Activated CD4-positive, alpha-beta T cell treated with anti-CD3 and anti-CD28 coated beads for 36 hours (primary cell): ENCODE measurements at regions of chr2 and their contacts with region 1.

Region 1: DNA sequence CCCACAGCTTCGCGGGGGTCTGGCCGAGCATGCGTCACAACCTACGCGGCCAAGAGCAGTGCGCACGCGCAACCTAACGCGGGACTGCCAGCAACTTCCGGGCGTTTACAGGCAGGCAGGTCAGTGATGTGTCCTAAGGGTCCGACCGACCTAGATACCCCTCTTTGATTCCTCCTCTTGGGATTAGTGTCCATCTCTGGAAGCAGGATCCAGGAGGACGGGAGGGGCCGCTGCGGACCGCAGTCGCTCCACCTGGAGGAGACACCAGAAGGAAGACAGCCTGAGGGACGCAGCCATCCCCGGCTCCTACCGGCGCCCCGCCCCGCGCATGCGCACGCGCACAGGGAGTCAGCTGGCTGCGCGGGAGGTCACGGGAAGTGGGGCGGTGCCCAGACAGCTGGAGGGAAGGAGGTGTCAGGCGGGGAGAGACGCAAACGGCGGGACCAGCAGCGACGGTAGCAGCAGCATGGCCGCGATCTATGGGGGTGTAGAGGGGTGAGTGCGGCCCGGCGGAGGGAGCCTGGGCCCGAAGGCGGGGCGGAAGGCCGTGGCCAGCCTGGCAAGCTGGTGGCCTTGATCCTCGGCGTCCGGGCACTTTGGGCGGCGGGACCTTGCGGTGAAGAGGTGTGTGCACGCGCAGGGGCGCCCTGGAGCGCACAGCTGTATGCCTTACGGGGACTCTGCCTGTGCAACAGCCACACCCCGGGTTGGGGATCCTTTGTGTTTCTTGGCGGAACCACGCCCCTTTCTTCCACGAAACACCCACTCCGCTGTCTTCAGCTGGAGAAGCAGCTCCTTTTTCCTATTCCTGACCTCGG is at the start of gene NAGK:
- DNase-seq: peak; percentile 98
- ATAC-seq: peak; percentile 81
- H3K4me3 Mint-ChIP-seq: peak within 1 kb of the TSS; percentile 98
- H3K27ac Mint-ChIP-seq: peak within 1 kb of the TSS; percentile 97
- H3K4me1 Mint-ChIP-seq: peaks cover 53% of the 10 kb centered on the region
- H3K27me3 Mint-ChIP-seq: no peaks in the 10 kb centered on the region
- total RNA-seq, gene NAGK: 39.7 to 40.6 TPM

Region 2: GRCh38 chr2:70994756-70995729 is 73.4 kb before region 1 on chr2 and contains the start of gene TEX261:
- CTCF ChIA-PET with region 1: interaction called, 17 read pairs
- POLR2A ChIA-PET with region 1: no interaction called
- intact Hi-C with region 1: loop called (anchors 1 to 2 kb)
- DNase-seq: peak; percentile 94
- ATAC-seq: peak; percentile 97
- H3K4me3 Mint-ChIP-seq: peak within 1 kb of the TSS; percentile 98
- H3K27ac Mint-ChIP-seq: peak within 1 kb of the TSS; percentile 93
- H3K4me1 Mint-ChIP-seq: peaks cover 29% of the 10 kb centered on the region
- H3K27me3 Mint-ChIP-seq: no peaks in the 10 kb centered on the region
- total RNA-seq, gene TEX261: 39.1 to 48.5 TPM

Region 3: GRCh38 chr2:71018625-71019024 is 49.8 kb before region 1 on chr2:
- CTCF ChIA-PET with region 1: interaction called, 4 read pairs
- POLR2A ChIA-PET with region 1: no interaction called
- intact Hi-C with region 1: loop called in 1 of 2 experiments (anchors 1 kb)
- DNase-seq: no peak
- ATAC-seq: peak; percentile 47
- H3K4me3 Mint-ChIP-seq: no peak overlapping the region
- H3K27ac Mint-ChIP-seq: no peak overlapping the region
- H3K4me1 Mint-ChIP-seq: peaks cover 7% of the 10 kb centered on the region
- H3K27me3 Mint-ChIP-seq: peaks cover 2% of the 10 kb centered on the region

Region 4: DNA sequence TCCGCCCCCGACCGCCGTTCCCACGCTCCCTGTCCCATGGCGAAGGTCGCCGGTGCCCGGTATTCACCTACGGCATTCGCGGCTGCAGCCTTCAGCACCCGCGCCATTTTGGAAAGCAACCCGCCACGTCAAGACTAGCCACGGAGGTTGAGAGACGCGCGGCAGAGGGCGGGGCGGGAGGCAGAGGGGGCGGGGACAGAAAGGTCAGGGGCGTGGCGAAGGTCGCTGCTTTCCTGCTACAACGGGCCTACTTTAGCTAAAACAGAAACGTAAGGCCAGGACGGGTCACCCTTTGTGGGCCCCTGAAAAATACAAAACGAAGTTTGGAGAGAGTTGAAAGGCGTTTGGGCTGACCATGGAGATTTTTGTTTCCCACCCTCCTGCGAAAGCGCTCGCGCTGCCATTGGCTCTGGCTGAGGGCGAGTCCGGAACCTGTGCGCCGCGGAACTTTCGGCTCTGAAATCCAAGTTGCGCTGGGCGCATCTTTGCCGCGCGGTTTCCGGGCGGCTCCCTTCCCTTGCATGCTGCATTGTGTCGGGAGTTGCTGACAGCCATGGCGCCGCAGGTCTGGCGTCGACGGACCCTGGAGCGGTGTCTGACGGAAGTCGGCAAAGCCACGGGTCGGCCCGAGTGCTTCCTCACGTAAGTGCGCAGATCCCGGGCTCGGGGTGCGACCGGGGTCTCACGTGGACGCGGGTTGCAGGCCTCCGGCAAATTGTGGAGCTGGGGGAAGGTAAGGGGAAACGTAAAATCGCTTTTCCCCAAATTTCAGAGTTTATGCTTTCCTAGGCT is 61.9 kb after region 1 on chr2 and contains the starts of genes MCEE and MPHOSPH10:
- CTCF ChIA-PET with region 1: interaction called, 20 read pairs
- POLR2A ChIA-PET with region 1: interaction called, 3 read pairs
- intact Hi-C with region 1: loop called (anchors 1 kb)
- DNase-seq: peak; percentile 95
- ATAC-seq: peak; percentile 95
- H3K4me3 Mint-ChIP-seq: no peak within 1 kb of the TSS
- H3K27ac Mint-ChIP-seq: no peak within 1 kb of the TSS
- H3K4me1 Mint-ChIP-seq: peaks cover 18% of the 10 kb centered on the region
- H3K27me3 Mint-ChIP-seq: no peaks in the 10 kb centered on the region
- total RNA-seq, gene MCEE: 10.2 to 13.6 TPM
- total RNA-seq, gene MPHOSPH10: 48.5 to 61.9 TPM

Region 5: GRCh38 chr2:71263386-71263785 is 195.0 kb after region 1 on chr2:
- CTCF ChIA-PET with region 1: no interaction called
- POLR2A ChIA-PET with region 1: no interaction called
- intact Hi-C with region 1: no loop called
- DNase-seq: no peak
- ATAC-seq: no peak
- H3K4me3 Mint-ChIP-seq: no peak overlapping the region
- H3K27ac Mint-ChIP-seq: no peak overlapping the region
- H3K4me1 Mint-ChIP-seq: no peaks in the 10 kb centered on the region
- H3K27me3 Mint-ChIP-seq: peaks cover 8% of the 10 kb centered on the region

Region 6: GRCh38 chr2:71276311-71277146 is 208.1 kb after region 1 on chr2:
- CTCF ChIA-PET with region 1: no interaction called
- POLR2A ChIA-PET with region 1: no interaction called
- intact Hi-C with region 1: loop called in 1 of 2 experiments (anchors 1 kb)
- DNase-seq: peak; percentile 94
- ATAC-seq: peak; percentile 100
- H3K4me3 Mint-ChIP-seq: peak overlapping the region; percentile 67
- H3K27ac Mint-ChIP-seq: no peak overlapping the region
- H3K4me1 Mint-ChIP-seq: peaks cover 14% of the 10 kb centered on the region
- H3K27me3 Mint-ChIP-seq: peaks cover 76% of the 10 kb centered on the region